ENCODE measurements at regions of chr1 and their contacts with region 1.

Region 1: GRCh38 chr1:246012341-246012740 is 494.7 kb downstream of the SMYD3 start:
- DNase-seq: peak in 1 of 2 experiments; percentile 35
- H3K4me3 ChIP-seq: no peak overlapping the region
- H3K4me3 Mint-ChIP-seq: no peak overlapping the region
- H3K27ac Mint-ChIP-seq: no peak overlapping the region
- H3K4me1 ChIP-seq: no peaks in the 10 kb centered on the region
- H3K4me1 Mint-ChIP-seq: no peaks in the 10 kb centered on the region
- H3K27me3 ChIP-seq: no peaks in the 10 kb centered on the region
- H3K27me3 Mint-ChIP-seq: no peaks in the 10 kb centered on the region
- CTCF ChIP-seq: peak; percentile 55 to 61

Region 2: DNA sequence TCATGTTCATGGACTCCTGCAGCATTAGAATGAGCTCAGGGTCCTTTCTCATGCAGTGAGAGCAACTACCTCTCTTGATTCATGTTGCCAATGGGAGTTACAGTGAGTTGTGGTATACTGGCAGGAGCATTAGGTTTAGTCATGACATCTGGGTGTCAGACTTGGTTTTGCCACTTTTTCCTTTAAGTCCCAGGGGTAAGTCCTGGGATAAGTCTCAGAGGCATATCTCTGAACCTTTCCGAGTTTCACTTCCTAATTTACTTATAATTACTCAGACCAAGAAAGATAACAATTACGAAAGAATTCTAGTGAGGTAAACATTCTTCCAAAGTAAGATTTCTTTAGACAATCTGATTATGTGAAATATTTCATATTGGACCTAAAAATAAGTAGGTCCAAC is 111.3 kb before region 1 on chr1:
- CTCF ChIA-PET with region 1: no interaction called
- POLR2A ChIA-PET with region 1: no interaction called
- intact Hi-C with region 1: no loop called
- DNase-seq: no peak
- H3K4me3 ChIP-seq: no peak overlapping the region
- H3K4me3 Mint-ChIP-seq: no peak overlapping the region
- H3K27ac Mint-ChIP-seq: no peak overlapping the region
- H3K4me1 ChIP-seq: no peaks in the 10 kb centered on the region
- H3K4me1 Mint-ChIP-seq: no peaks in the 10 kb centered on the region
- H3K27me3 ChIP-seq: no peaks in the 10 kb centered on the region; the same call in 1 of the 2 replicates
- H3K27me3 Mint-ChIP-seq: no peaks in the 10 kb centered on the region
- CTCF ChIP-seq: no peak

Region 3: GRCh38 chr1:246117066-246117791 is 104.9 kb after region 1 on chr1:
- CTCF ChIA-PET with region 1: no interaction called
- POLR2A ChIA-PET with region 1: no interaction called
- intact Hi-C with region 1: loop called (anchors 1 kb)
- DNase-seq: peak; percentile 36 to 49
- H3K4me3 ChIP-seq: no peak overlapping the region
- H3K4me3 Mint-ChIP-seq: no peak overlapping the region
- H3K27ac Mint-ChIP-seq: no peak overlapping the region
- H3K4me1 ChIP-seq: peaks cover 15% of the 10 kb centered on the region
- H3K4me1 Mint-ChIP-seq: peaks cover 24% of the 10 kb centered on the region
- H3K27me3 ChIP-seq: no peaks in the 10 kb centered on the region
- H3K27me3 Mint-ChIP-seq: no peaks in the 10 kb centered on the region
- CTCF ChIP-seq: peak; percentile 32 to 62

Region 4: DNA sequence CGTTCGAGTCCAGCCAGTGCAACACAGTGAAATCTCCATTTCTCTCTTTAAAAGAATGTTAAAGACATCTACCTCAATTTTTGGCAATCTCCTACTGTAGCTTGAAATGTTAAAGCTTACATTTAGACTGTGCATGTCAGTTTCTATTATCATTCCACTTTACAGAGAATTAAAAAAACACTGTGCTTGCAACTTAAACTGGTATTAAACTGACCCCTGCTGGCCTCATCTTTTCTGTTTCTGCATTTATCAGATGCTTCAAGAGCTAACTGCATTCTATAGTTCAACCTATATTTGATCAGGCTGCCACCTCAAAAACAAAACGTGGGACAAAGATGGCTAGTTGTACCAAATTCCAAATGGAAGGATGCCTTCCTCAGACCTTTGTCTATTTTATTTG is 268.2 kb after region 1 on chr1:
- CTCF ChIA-PET with region 1: interaction called, 5 read pairs
- POLR2A ChIA-PET with region 1: no interaction called
- intact Hi-C with region 1: loop called (anchors 1 kb)
- DNase-seq: peak in 1 of 2 experiments; percentile 5
- H3K4me3 ChIP-seq: no peak overlapping the region
- H3K4me3 Mint-ChIP-seq: no peak overlapping the region
- H3K27ac Mint-ChIP-seq: no peak overlapping the region
- H3K4me1 ChIP-seq: peaks cover 5% of the 10 kb centered on the region
- H3K4me1 Mint-ChIP-seq: no peaks in the 10 kb centered on the region
- H3K27me3 ChIP-seq: no peaks in the 10 kb centered on the region
- H3K27me3 Mint-ChIP-seq: no peaks in the 10 kb centered on the region
- CTCF ChIP-seq: peak in 1 of 2 experiments; percentile 6

Measured in Caco-2 (cell line).